ENCODE measurements at regions of chr17 and their contacts with region 1.

Region 1: GRCh38 chr17:55053855-55054254 is 85.3 kb downstream of the STXBP4 start:
- DNase-seq: no peak
- H3K4me3 ChIP-seq: no peak overlapping the region
- H3K4me3 Mint-ChIP-seq: no peak overlapping the region
- H3K27ac Mint-ChIP-seq: no peak overlapping the region
- H3K4me1 ChIP-seq: no peaks in the 10 kb centered on the region
- H3K4me1 Mint-ChIP-seq: no peaks in the 10 kb centered on the region
- H3K27me3 ChIP-seq: no peaks in the 10 kb centered on the region
- H3K27me3 Mint-ChIP-seq: no peaks in the 10 kb centered on the region
- CTCF ChIP-seq: peak; percentile 17 to 47

Region 2: GRCh38 chr17:54992797-54993639 is 60.8 kb before region 1 on chr17:
- CTCF ChIA-PET with region 1: no interaction called
- POLR2A ChIA-PET with region 1: no interaction called
- intact Hi-C with region 1: loop called (anchors 5 kb)
- DNase-seq: peak in 1 of 2 experiments; percentile 56
- H3K4me3 ChIP-seq: no peak overlapping the region
- H3K4me3 Mint-ChIP-seq: no peak overlapping the region
- H3K27ac Mint-ChIP-seq: no peak overlapping the region
- H3K4me1 ChIP-seq: no peaks in the 10 kb centered on the region
- H3K4me1 Mint-ChIP-seq: no peaks in the 10 kb centered on the region
- H3K27me3 ChIP-seq: no peaks in the 10 kb centered on the region
- H3K27me3 Mint-ChIP-seq: no peaks in the 10 kb centered on the region
- CTCF ChIP-seq: peak; percentile 60 to 64

Region 3: GRCh38 chr17:55090079-55090492 is 36.2 kb after region 1 on chr17:
- CTCF ChIA-PET with region 1: no interaction called
- POLR2A ChIA-PET with region 1: no interaction called
- intact Hi-C with region 1: loop called (anchors 1 kb)
- DNase-seq: peak in 1 of 2 experiments; percentile 4
- H3K4me3 ChIP-seq: no peak overlapping the region
- H3K4me3 Mint-ChIP-seq: no peak overlapping the region
- H3K27ac Mint-ChIP-seq: peak overlapping the region; percentile 43
- H3K4me1 ChIP-seq: no peaks in the 10 kb centered on the region
- H3K4me1 Mint-ChIP-seq: peaks cover 7% of the 10 kb centered on the region
- H3K27me3 ChIP-seq: no peaks in the 10 kb centered on the region
- H3K27me3 Mint-ChIP-seq: no peaks in the 10 kb centered on the region
- CTCF ChIP-seq: no peak

Region 4: DNA sequence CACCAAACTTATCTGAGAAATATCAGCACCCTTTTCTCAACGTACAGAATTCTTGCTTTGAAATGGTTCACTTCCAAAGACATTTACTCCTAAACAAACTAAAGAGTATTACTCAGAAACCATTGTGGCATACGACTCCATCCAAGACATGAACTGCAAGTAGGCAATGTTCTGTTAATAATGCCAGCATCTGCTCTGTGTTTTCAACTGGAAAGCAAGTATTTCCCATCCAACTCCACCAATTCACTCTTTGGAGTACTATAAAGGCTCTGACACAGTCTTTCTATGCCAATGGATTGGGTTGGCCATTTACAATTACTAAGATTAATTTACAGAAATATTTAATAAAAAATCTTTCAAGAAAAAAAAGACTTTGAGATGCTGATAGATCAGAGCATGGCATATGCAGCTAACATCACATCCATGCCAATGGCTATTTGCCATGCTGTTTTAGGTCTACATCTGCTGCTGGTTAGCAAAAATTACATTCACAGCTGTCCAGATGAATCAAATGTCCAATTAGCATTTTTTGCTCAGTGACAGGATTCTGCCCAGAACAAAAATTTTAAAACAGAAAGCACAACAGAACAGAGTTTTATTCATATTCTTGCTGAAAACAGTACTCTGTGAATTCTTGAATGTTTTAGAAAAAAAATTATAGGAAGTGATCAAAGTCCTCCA is 145.0 kb after region 1 on chr17:
- CTCF ChIA-PET with region 1: no interaction called
- POLR2A ChIA-PET with region 1: no interaction called
- intact Hi-C with region 1: loop called (anchors 10 kb)
- DNase-seq: no peak
- H3K4me3 ChIP-seq: no peak overlapping the region
- H3K4me3 Mint-ChIP-seq: no peak overlapping the region
- H3K27ac Mint-ChIP-seq: no peak overlapping the region
- H3K4me1 ChIP-seq: no peaks in the 10 kb centered on the region
- H3K4me1 Mint-ChIP-seq: no peaks in the 10 kb centered on the region
- H3K27me3 ChIP-seq: no peaks in the 10 kb centered on the region
- H3K27me3 Mint-ChIP-seq: peaks cover 6% of the 10 kb centered on the region
- CTCF ChIP-seq: no peak

Region 5: GRCh38 chr17:55295411-55296170 is 241.7 kb after region 1 on chr17:
- CTCF ChIA-PET with region 1: no interaction called
- POLR2A ChIA-PET with region 1: no interaction called
- intact Hi-C with region 1: loop called (anchors 2 kb)
- DNase-seq: peak; percentile 70 to 84
- H3K4me3 ChIP-seq: no peak overlapping the region
- H3K4me3 Mint-ChIP-seq: peak overlapping the region; percentile 35
- H3K27ac Mint-ChIP-seq: peak overlapping the region; percentile 20
- H3K4me1 ChIP-seq: peaks cover 20% of the 10 kb centered on the region
- H3K4me1 Mint-ChIP-seq: peaks cover 13% of the 10 kb centered on the region
- H3K27me3 ChIP-seq: no peaks in the 10 kb centered on the region
- H3K27me3 Mint-ChIP-seq: no peaks in the 10 kb centered on the region
- CTCF ChIP-seq: peak; percentile 89 to 92

Measured in Caco-2 (cell line).